ENCODE measurements at regions of chr6 and their contacts with region 1.

Region 1: GRCh38 chr6:90478789-90479602 is 107.9 kb downstream of the MAP3K7 start:
- DNase-seq: peak; percentile 67 to 89 (median 74)
- H3K4me3 ChIP-seq: no peak overlapping the region
- H3K4me3 Mint-ChIP-seq: peak overlapping the region in 4 of 7 donors; percentile 36 to 55 (median 43)
- H3K27ac ChIP-seq: no peak overlapping the region
- H3K27ac Mint-ChIP-seq: peak overlapping the region in 6 of 8 donors; percentile 17 to 89 (median 84)
- H3K4me1 ChIP-seq: peaks cover 15% of the 10 kb centered on the region
- H3K4me1 Mint-ChIP-seq: peaks cover 14 to 36% (median 28%) of the 10 kb centered on the region in 3 donors
- H3K27me3 ChIP-seq: no peaks in the 10 kb centered on the region
- H3K27me3 Mint-ChIP-seq: no peaks in the 10 kb centered on the region

Region 2: GRCh38 chr6:90403489-90404381 is 75.3 kb before region 1 on chr6:
- CTCF ChIA-PET with region 1: interaction called, 17 read pairs
- POLR2A ChIA-PET with region 1: interaction called, 3 read pairs
- DNase-seq: no peak
- H3K4me3 ChIP-seq: no peak overlapping the region
- H3K4me3 Mint-ChIP-seq: peak overlapping the region in 4 of 7 donors; percentile 21 to 78 (median 57)
- H3K27ac ChIP-seq: no peak overlapping the region
- H3K27ac Mint-ChIP-seq: peak overlapping the region; percentile 84 to 96 (median 94)
- H3K4me1 ChIP-seq: peaks cover 31% of the 10 kb centered on the region
- H3K4me1 Mint-ChIP-seq: peaks cover 63 to 79% (median 75%) of the 10 kb centered on the region in 3 donors
- H3K27me3 ChIP-seq: no peaks in the 10 kb centered on the region
- H3K27me3 Mint-ChIP-seq: no peaks in the 10 kb centered on the region

Region 3: GRCh38 chr6:90493332-90493731 is 14.3 kb after region 1 on chr6:
- CTCF ChIA-PET with region 1: interaction called, 16 read pairs
- POLR2A ChIA-PET with region 1: no interaction called
- DNase-seq: no peak
- H3K4me3 ChIP-seq: no peak overlapping the region
- H3K4me3 Mint-ChIP-seq: no peak overlapping the region
- H3K27ac ChIP-seq: no peak overlapping the region
- H3K27ac Mint-ChIP-seq: no peak overlapping the region
- H3K4me1 ChIP-seq: no peaks in the 10 kb centered on the region
- H3K4me1 Mint-ChIP-seq: no peaks in the 10 kb centered on the region
- H3K27me3 ChIP-seq: no peaks in the 10 kb centered on the region
- H3K27me3 Mint-ChIP-seq: peaks cover 10 to 58% of the 10 kb centered on the region in 2 donors

Region 4: GRCh38 chr6:90610751-90611542 is 132.0 kb after region 1 on chr6:
- CTCF ChIA-PET with region 1: no interaction called
- POLR2A ChIA-PET with region 1: no interaction called
- DNase-seq: peak in 2 of 5 donors; percentile 9 to 23
- H3K4me3 ChIP-seq: peak overlapping the region; percentile 52
- H3K4me3 Mint-ChIP-seq: peak overlapping the region; percentile 33 to 91 (median 83)
- H3K27ac ChIP-seq: no peak overlapping the region
- H3K27ac Mint-ChIP-seq: peak overlapping the region in 1 of 8 donors; percentile 69
- H3K4me1 ChIP-seq: peaks cover 14% of the 10 kb centered on the region
- H3K4me1 Mint-ChIP-seq: peaks cover 12 to 13% (median 13%) of the 10 kb centered on the region in 3 donors
- H3K27me3 ChIP-seq: peaks cover 23% of the 10 kb centered on the region
- H3K27me3 Mint-ChIP-seq: peaks cover 36 to 74% of the 10 kb centered on the region in 2 donors